ENCODE measurements at regions of chr22 and their contacts with region 1.

Region 1: GRCh38 chr22:46542011-46542985 is 4.9 kb upstream of the CELSR1 start:
- DNase-seq: peak; percentile 72 to 87
- H3K4me3 ChIP-seq: no peak overlapping the region
- H3K4me1 ChIP-seq: peaks cover 2% of the 10 kb centered on the region; the same call in 1 of the 2 replicates
- H3K27me3 ChIP-seq: no peaks in the 10 kb centered on the region

Region 2: GRCh38 chr22:45994491-45995404 is 547.5 kb before region 1 on chr22:
- in situ Hi-C with region 1: loop called (anchors 10 kb)
- DNase-seq: peak; percentile 47 to 93
- H3K4me3 ChIP-seq: no peak overlapping the region
- H3K4me1 ChIP-seq: peaks cover 6% of the 10 kb centered on the region
- H3K27me3 ChIP-seq: no peaks in the 10 kb centered on the region

Region 3: DNA sequence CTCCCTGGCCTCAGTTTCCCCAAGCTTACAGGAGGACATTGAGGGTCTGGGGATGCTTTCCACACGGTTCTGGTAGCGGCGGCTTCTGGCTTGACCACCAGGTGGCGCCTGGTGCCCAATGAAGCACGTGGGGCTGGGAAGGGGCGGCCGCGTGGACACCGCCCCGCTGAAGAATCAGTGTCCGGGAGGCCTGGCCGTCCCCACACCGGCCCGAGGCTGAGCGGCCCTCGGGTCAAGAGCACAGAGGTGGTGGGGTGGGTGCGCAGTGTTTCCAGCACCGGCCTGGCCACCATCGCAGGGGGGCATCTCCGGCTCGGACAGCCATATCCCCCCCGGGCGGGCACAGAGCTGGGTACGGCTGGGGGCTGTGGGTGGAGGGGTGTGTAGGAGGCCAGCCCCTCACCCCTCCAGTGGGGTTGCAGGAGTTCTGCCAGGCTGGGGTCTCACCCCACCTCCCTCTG is 419.8 kb before region 1 on chr22:
- in situ Hi-C with region 1: loop called (anchors 5 kb)
- DNase-seq: peak; percentile 33 to 88
- H3K4me3 ChIP-seq: no peak overlapping the region
- H3K4me1 ChIP-seq: no peaks in the 10 kb centered on the region
- H3K27me3 ChIP-seq: no peaks in the 10 kb centered on the region

Region 4: GRCh38 chr22:46367707-46368191 is 174.5 kb before region 1 on chr22:
- in situ Hi-C with region 1: loop called (anchors 5 kb)
- DNase-seq: peak; percentile 41 to 85
- H3K4me3 ChIP-seq: no peak overlapping the region
- H3K4me1 ChIP-seq: no peaks in the 10 kb centered on the region
- H3K27me3 ChIP-seq: no peaks in the 10 kb centered on the region

Region 5: DNA sequence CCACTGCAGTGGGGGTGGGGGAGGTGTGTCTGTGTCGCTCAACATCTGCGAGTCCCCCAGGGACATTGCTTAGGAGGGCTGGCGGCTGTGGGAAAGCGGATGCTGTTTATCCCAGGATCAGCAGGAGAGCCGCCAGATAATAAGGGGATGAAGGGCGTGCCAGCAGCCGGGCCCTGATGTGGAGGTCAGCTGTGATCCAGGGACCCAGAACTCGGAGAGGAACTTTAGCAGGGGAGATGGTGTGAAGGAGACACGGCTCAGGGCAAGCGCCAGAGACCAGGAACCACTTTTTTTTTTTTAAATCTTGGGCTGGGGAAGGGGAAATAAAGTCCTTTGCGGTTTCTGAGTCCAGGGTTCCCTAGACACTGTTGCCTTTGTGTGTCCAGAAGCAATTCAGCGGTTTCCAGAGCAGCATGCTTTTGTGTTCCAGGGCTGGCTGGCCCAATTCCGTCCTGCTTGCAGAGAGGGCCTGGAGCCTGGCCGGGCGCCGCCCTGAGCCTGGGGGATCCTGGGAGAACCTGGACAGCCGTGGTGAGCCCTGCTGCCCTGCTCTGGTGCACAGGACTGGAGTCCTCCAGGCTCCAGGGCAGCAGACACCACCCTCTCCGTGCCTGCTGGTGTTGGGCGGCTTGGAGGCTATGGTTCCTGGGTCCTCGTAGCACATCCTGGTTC is 77.7 kb after region 1 on chr22 and contains the start of gene GRAMD4:
- in situ Hi-C with region 1: no loop called
- DNase-seq: peak in 1 of 2 experiments; percentile 21
- H3K4me3 ChIP-seq: no peak within 1 kb of the TSS
- H3K4me1 ChIP-seq: no peaks in the 10 kb centered on the region
- H3K27me3 ChIP-seq: no peaks in the 10 kb centered on the region